ENCODE measurements at regions of chr10 and their contacts with region 1.

Region 1: DNA sequence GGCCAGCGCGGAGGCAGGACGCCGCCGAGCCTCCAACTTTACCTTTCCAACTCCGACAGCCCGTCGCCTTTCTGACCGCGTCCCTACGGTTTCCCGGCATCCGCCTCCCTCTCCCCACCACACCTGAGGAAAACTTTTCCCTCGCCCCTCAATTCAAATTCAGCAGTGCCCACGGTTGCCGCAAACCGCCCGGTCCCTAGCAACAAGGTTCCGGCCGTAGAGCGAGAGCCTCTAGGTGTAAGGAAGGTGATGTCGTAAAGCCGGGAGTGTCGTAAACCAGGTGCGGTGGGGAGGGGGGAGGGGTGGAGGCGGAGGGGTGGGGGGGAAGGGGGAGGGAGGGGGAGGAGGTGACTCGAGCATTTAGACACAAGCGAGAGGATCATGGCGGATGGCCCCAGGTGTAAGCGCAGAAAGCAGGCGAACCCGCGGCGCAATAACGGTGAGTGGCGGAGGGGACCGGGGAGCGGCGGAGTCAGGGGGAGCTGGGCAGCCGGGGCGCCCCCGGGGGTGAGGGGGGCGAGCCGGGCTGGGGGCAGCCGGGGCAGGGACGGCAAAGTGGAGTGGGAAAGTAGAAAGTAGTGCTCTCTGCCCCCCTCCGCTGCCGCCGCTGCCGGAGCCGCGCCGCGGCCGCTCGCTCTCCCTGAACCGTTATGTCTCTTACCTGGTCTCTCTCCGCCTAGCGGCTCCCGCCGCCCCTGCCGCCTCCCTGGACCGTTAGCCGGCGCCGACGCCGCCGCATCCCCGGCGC is at the start of gene ZEB1:
- DNase-seq: peak; percentile 91
- ATAC-seq: peak; percentile 75
- H3K4me3 ChIP-seq: peak within 1 kb of the TSS; percentile 70 to 86
- H3K27ac ChIP-seq: peak within 1 kb of the TSS; percentile 79
- H3K4me1 ChIP-seq: peaks cover 5 to 17% of the 10 kb centered on the region in 2 experiments; a peak in 3 of 4 replicates
- H3K27me3 ChIP-seq: no peaks in the 10 kb centered on the region
- CTCF ChIP-seq: peak in 1 of 3 experiments; percentile 57; a peak in 2 of 6 replicates
- POLR2A ChIP-seq: no peak
- RAD21 ChIP-seq: no peak
- total RNA-seq, gene ZEB1: 3.4 TPM

Region 2: GRCh38 chr10:30671026-30671616 is 647.9 kb before region 1 on chr10:
- CTCF ChIA-PET with region 1: no interaction called
- POLR2A ChIA-PET with region 1: no interaction called
- RAD21 ChIA-PET with region 1: no interaction called
- intact Hi-C with region 1: no loop called
- DNase-seq: peak; percentile 65
- ATAC-seq: peak; percentile 93
- H3K4me3 ChIP-seq: peak overlapping the region; percentile 18 to 40; a peak in 3 of 4 replicates
- H3K27ac ChIP-seq: no peak overlapping the region
- H3K4me1 ChIP-seq: no peaks in the 10 kb centered on the region
- H3K27me3 ChIP-seq: no peaks in the 10 kb centered on the region
- CTCF ChIP-seq: peak; percentile 56 to 72 (median 68); a peak in 5 of 6 replicates
- POLR2A ChIP-seq: no peak
- RAD21 ChIP-seq: peak; percentile 73

Region 3: DNA sequence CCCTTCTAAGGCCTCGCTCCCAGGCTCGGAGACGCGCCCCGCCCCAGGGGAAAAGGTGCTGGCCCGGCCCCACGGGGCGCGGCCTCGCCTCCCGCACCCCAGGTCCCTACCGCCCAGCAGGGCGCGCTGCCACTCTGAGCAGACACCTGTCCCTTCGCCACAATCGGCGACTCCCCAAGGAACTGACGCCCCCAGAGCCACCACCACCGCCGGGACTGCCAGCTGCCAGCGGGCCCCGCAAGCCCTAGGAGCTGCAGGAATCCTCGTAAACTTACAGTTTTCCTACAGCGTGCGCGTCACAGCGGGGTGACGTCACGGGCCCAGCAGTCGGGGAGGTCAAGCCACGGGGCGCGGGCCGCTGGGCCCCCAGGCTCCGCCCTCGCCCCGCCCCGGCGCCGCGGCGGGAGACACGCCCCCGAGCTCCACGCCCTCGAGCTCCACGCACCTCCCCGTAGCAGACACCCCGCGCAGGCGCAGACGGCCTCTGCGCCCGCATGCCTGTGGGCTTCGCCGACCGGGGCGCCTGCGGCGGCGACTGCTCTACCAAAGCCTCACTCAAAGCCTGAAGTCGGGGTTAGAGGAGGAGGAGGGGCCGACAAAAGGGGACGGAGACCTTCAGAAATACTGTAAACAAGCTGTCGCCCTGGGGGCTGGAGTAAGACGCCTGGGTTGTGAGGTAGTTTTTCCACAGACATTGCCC is 287.3 kb before region 1 on chr10 and contains the start of gene ZNF438:
- CTCF ChIA-PET with region 1: no interaction called
- POLR2A ChIA-PET with region 1: no interaction called
- RAD21 ChIA-PET with region 1: no interaction called
- intact Hi-C with region 1: loop called (anchors 1 kb)
- DNase-seq: peak; percentile 76
- ATAC-seq: peak; percentile 84
- H3K4me3 ChIP-seq: peak within 1 kb of the TSS; percentile 57 to 65
- H3K27ac ChIP-seq: peak within 1 kb of the TSS; percentile 79
- H3K4me1 ChIP-seq: peaks cover 8 to 41% of the 10 kb centered on the region in 2 experiments
- H3K27me3 ChIP-seq: no peaks in the 10 kb centered on the region
- CTCF ChIP-seq: peak; percentile 27 to 59 (median 56); a peak in 5 of 6 replicates
- POLR2A ChIP-seq: no peak
- RAD21 ChIP-seq: peak; percentile 81
- total RNA-seq, gene ZNF438: 3.3 TPM

Region 4: GRCh38 chr10:31083765-31084184 is 235.3 kb before region 1 on chr10:
- CTCF ChIA-PET with region 1: no interaction called
- POLR2A ChIA-PET with region 1: no interaction called
- RAD21 ChIA-PET with region 1: no interaction called
- intact Hi-C with region 1: loop called (anchors 2 kb)
- DNase-seq: peak; percentile 72
- ATAC-seq: peak; percentile 97
- H3K4me3 ChIP-seq: no peak overlapping the region
- H3K27ac ChIP-seq: no peak overlapping the region
- H3K4me1 ChIP-seq: peaks cover 0 to 7% of the 10 kb centered on the region in 2 experiments; a peak in 3 of 4 replicates
- H3K27me3 ChIP-seq: no peaks in the 10 kb centered on the region
- CTCF ChIP-seq: peak; percentile 52 to 79 (median 74)
- POLR2A ChIP-seq: no peak
- RAD21 ChIP-seq: peak; percentile 83

Region 5: DNA sequence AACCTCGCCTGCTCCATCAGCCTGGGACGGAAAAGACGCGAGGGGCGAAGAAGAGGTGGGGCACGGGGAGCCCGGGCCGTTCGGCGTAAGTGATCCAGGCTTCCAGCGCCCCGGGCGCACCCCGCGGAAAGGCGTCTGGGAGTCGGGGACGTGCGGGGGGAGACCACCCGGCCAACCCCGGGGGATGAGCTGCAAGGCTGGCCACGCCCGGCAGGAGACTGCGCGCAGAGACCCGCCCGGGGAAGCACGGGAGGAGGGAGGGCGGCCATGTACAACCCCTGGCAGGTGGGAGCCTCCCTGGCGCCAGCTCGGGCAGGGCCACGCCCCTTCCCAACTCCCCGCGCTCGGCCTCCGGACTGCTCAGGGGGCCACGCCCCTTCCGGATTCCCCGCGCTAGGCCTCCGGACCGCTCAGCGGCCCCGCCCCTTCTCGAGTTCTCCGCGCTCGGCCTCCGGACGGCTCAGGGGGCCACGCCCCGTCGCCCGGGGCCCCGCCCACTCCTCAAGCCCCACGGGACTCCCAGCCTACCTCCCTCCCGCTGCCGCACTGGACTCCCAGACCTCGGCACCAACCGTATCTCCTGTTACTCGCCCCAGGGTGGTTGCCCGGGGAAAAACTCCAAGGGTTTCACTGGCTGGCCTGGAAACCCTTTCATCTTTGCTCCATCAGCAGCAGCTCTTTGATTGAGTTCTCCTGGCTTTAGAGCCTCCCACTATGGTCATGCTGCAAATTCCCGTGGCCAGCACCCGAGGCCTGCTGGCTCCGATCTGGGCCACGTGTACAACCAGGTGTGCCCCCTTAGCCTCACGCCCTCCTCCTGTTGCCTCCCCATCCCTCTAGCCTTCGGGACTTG is 284.4 kb after region 1 on chr10:
- CTCF ChIA-PET with region 1: no interaction called
- POLR2A ChIA-PET with region 1: no interaction called
- RAD21 ChIA-PET with region 1: no interaction called
- intact Hi-C with region 1: loop called (anchors 10 kb)
- DNase-seq: peak; percentile 90
- ATAC-seq: peak; percentile 98
- H3K4me3 ChIP-seq: peak overlapping the region; percentile 60 to 67
- H3K27ac ChIP-seq: peak overlapping the region; percentile 61
- H3K4me1 ChIP-seq: peaks cover 9 to 32% of the 10 kb centered on the region in 2 experiments
- H3K27me3 ChIP-seq: no peaks in the 10 kb centered on the region
- CTCF ChIP-seq: no peak
- POLR2A ChIP-seq: no peak
- RAD21 ChIP-seq: no peak

Measured in HCT116 (cell line).